Left ventricle myocardium inferior (tissue), 1 donor: ENCODE measurements at regions of chr1 and their contacts with region 1.

Region 1: DNA sequence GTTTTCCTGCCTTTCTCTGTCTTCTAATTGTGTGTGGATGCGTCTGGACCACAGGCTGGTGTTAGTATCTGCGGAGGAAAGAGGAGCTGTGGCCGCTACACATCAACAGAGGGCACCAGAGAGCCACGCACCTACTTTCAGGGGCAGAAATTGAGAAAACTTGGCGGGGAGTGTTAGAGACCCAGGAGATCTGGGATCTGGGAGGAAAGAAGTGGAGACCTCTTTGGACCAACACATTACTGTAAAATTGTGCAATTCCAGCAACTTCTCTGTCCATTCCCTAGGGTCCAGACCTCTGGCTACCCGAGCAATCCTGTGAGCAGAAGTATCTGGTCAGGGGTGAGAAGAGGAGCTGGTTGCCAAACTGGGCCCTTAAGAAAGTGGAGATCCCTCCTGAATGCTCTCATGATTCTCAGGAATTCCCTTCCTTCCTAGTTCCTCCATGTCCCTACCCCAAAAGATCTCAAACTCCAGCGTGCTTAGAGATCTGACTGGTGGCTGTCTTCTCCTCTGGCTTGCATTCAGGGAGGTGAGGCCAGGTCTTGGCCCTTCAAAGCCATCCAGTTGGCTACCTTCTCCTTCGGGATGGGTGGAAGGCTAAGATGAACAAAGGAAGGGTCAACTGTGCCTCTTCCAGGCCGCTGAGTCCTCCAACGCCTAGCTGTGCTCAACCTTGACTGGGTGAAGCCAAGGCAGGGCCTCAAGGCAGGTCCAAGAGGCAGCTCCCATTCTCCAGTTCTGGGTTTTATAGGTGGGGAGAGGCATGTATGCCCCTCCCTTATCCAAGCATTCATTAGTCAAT is 1.2 kb upstream of the KIRREL1 start:
- DNase-seq: peak; percentile 74
- H3K4me3 ChIP-seq: peak overlapping the region; percentile 90
- H3K27ac ChIP-seq: peak overlapping the region; percentile 90
- H3K4me1 ChIP-seq: peaks cover 35% of the 10 kb centered on the region
- H3K27me3 ChIP-seq: peaks cover 55% of the 10 kb centered on the region
- CTCF ChIP-seq: peak; percentile 98

Region 2: DNA sequence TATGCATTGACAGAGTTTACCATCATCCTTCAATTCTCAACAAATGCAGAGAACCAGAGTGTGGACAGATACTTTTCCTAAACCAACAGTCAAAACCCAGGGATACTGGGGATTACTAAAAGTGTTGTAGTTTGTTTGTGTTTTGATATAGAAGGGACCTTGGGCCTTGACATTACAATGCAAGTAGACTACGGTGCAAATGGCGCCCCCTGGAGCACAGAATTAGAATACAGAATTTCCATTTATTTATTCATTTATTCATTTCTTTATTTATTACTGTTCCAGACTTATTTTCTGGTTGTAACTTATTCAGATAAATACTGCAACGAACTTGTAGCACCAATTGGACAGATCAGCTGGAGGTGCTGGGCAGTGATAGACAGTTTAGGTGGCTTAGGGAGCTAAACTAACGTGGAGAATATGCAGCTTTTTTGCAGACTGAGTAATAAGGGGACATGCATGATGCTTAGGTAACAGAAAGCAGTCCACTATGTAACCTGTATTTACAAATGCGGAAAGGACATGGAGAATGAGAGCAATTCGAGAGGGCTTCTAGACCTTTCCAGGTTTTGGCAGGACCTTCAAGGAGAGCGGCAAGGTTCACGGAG is 43.8 kb after region 1 on chr1:
- intact Hi-C with region 1: loop called (anchors 2 kb)
- DNase-seq: no peak
- H3K4me3 ChIP-seq: no peak overlapping the region
- H3K27ac ChIP-seq: peak overlapping the region; percentile 20
- H3K4me1 ChIP-seq: peaks cover 53% of the 10 kb centered on the region
- H3K27me3 ChIP-seq: no peaks in the 10 kb centered on the region
- CTCF ChIP-seq: peak; percentile 80

Region 3: GRCh38 chr1:158087320-158087927 is 95.2 kb after region 1 on chr1:
- intact Hi-C with region 1: loop called (anchors 5 kb)
- DNase-seq: peak; percentile 35
- H3K4me3 ChIP-seq: no peak overlapping the region
- H3K27ac ChIP-seq: no peak overlapping the region
- H3K4me1 ChIP-seq: no peaks in the 10 kb centered on the region
- H3K27me3 ChIP-seq: no peaks in the 10 kb centered on the region
- CTCF ChIP-seq: peak; percentile 87